CD8-positive, alpha-beta T cell (primary cell): ENCODE measurements at regions of chr10 and their contacts with region 1.

Region 1: GRCh38 chr10:35563261-35563891 is 41.8 kb upstream of the GJD4 start:
- DNase-seq: peak in 6 of 9 experiments; percentile 26 to 66 (median 42)
- ATAC-seq: peak; percentile 63
- H3K4me3 ChIP-seq: no peak overlapping the region
- H3K4me3 Mint-ChIP-seq: no peak overlapping the region
- H3K27ac ChIP-seq: no peak overlapping the region
- H3K27ac Mint-ChIP-seq: peak overlapping the region; percentile 16
- H3K4me1 ChIP-seq: peaks cover 7% of the 10 kb centered on the region
- H3K4me1 Mint-ChIP-seq: peaks cover 6% of the 10 kb centered on the region
- H3K27me3 ChIP-seq: no peaks in the 10 kb centered on the region
- H3K27me3 Mint-ChIP-seq: no peaks in the 10 kb centered on the region
- CTCF ChIP-seq: peak; percentile 88

Region 2: GRCh38 chr10:35246770-35247343 is 316.5 kb before region 1 on chr10:
- CTCF ChIA-PET with region 1: interaction called, 4 read pairs
- POLR2A ChIA-PET with region 1: no interaction called
- intact Hi-C with region 1: loop called (anchors 5 to 10 kb)
- DNase-seq: no peak
- ATAC-seq: no peak
- H3K4me3 ChIP-seq: no peak overlapping the region
- H3K4me3 Mint-ChIP-seq: no peak overlapping the region
- H3K27ac ChIP-seq: no peak overlapping the region
- H3K27ac Mint-ChIP-seq: no peak overlapping the region
- H3K4me1 ChIP-seq: no peaks in the 10 kb centered on the region
- H3K4me1 Mint-ChIP-seq: no peaks in the 10 kb centered on the region
- H3K27me3 ChIP-seq: no peaks in the 10 kb centered on the region
- H3K27me3 Mint-ChIP-seq: peaks cover 9% of the 10 kb centered on the region
- CTCF ChIP-seq: no peak

Region 3: DNA sequence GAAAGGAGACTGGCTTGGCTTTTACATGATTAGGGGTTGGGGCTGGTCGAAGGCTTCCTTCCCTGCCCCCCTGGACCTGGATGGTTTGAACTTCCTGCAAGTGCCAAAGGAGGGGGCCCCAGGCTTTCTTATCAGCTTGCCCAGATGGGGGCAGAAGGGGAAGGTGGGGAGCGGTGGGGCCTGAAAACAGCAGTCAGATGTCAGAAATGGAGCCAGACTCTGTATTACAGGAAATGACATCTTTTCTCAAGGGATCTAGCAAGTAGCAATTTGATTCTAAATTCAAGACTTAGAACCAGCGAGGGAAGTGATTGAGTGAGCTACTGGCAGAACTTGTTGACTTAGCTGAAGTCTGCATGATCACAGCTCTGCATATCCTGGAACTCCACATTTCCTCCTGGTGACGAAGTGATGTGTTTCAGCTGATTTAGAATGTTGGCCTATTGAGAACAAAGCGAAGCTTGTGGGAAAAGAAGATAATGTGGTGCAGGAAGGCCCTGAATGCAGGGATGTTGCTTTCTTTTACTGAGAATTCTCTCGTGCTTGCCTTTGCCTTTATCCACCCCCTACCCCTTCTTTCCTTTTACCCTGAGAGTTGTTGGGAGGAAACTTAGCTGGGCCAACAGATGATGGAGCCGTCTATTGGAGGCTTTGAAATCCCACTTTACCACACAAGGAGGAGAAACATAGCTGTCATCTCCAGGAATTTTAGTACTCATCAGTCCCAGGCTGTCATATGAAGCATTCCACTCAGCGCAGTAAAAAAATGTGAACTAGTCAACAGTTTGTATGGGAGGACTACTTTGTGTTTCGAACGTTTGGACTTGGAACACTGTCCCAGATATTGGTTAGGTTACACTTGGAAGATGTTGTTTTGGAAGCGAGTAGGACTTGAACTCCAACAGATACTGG is 183.9 kb before region 1 on chr10:
- CTCF ChIA-PET with region 1: interaction called, 6 read pairs
- POLR2A ChIA-PET with region 1: no interaction called
- intact Hi-C with region 1: loop called in 1 of 2 experiments (anchors 5 kb)
- DNase-seq: peak in 5 of 9 experiments; percentile 16 to 65 (median 35)
- ATAC-seq: peak; percentile 75
- H3K4me3 ChIP-seq: no peak overlapping the region
- H3K4me3 Mint-ChIP-seq: peak overlapping the region; percentile 69
- H3K27ac ChIP-seq: peak overlapping the region in 1 of 2 experiments; percentile 10
- H3K27ac Mint-ChIP-seq: peak overlapping the region; percentile 83
- H3K4me1 ChIP-seq: peaks cover 40% of the 10 kb centered on the region
- H3K4me1 Mint-ChIP-seq: peaks cover 82% of the 10 kb centered on the region
- H3K27me3 ChIP-seq: no peaks in the 10 kb centered on the region
- H3K27me3 Mint-ChIP-seq: no peaks in the 10 kb centered on the region
- CTCF ChIP-seq: no peak

Region 4: GRCh38 chr10:35520996-35521395 is 42.4 kb before region 1 on chr10:
- CTCF ChIA-PET with region 1: no interaction called
- POLR2A ChIA-PET with region 1: no interaction called
- intact Hi-C with region 1: no loop called
- DNase-seq: no peak
- ATAC-seq: no peak
- H3K4me3 ChIP-seq: no peak overlapping the region
- H3K4me3 Mint-ChIP-seq: no peak overlapping the region
- H3K27ac ChIP-seq: no peak overlapping the region
- H3K27ac Mint-ChIP-seq: no peak overlapping the region
- H3K4me1 ChIP-seq: peaks cover 6% of the 10 kb centered on the region
- H3K4me1 Mint-ChIP-seq: peaks cover 17% of the 10 kb centered on the region
- H3K27me3 ChIP-seq: no peaks in the 10 kb centered on the region
- H3K27me3 Mint-ChIP-seq: no peaks in the 10 kb centered on the region
- CTCF ChIP-seq: no peak

Region 5: DNA sequence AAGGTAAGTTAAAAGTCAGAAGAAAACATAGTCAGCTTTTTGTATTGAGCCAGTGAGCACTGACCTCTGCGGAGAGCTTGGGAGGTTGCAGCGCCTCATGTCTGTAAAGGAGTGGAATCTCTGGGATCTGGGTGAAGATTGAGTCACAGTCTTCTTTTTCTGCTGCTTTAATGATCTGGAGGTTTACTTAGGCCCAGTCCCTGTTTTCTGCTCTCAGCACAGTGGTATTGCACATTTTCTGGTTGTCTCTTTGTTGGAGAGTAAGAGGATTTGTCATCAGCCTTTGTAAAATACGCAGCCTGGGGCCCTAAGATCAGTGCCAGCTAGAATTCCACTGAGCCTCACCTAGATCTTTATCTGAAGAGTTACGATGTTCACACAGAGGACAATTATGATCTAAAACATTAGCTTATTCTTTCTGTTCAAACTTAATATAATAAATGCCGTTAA is 16.5 kb before region 1 on chr10:
- CTCF ChIA-PET with region 1: interaction called, 11 read pairs
- POLR2A ChIA-PET with region 1: no interaction called
- intact Hi-C with region 1: no loop called
- DNase-seq: no peak
- ATAC-seq: no peak
- H3K4me3 ChIP-seq: no peak overlapping the region
- H3K4me3 Mint-ChIP-seq: no peak overlapping the region
- H3K27ac ChIP-seq: no peak overlapping the region
- H3K27ac Mint-ChIP-seq: no peak overlapping the region
- H3K4me1 ChIP-seq: no peaks in the 10 kb centered on the region
- H3K4me1 Mint-ChIP-seq: no peaks in the 10 kb centered on the region
- H3K27me3 ChIP-seq: no peaks in the 10 kb centered on the region
- H3K27me3 Mint-ChIP-seq: no peaks in the 10 kb centered on the region
- CTCF ChIP-seq: no peak

Region 6: DNA sequence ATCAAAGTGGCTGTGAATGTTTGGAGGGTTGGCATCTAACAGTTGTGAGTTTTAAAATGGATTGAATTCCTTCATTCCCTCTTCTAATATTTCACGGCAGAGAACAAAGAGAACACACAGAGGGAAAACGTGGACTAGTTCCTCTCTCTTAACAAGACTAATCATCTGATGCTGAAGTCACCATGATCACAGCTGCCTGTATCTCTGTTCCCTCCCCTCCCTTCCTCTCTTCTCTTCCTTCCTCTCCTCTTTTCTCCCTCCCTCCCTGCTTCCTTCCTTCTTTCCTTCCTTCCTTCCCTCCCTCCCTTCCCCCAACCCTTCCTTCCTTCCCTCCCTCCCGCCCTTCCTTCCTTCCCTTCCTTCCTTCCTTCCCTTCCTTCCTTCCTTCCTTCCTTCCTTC is 31.7 kb after region 1 on chr10:
- CTCF ChIA-PET with region 1: no interaction called
- POLR2A ChIA-PET with region 1: no interaction called
- intact Hi-C with region 1: no loop called
- DNase-seq: no peak
- ATAC-seq: no peak
- H3K4me3 ChIP-seq: no peak overlapping the region
- H3K4me3 Mint-ChIP-seq: no peak overlapping the region
- H3K27ac ChIP-seq: no peak overlapping the region
- H3K27ac Mint-ChIP-seq: no peak overlapping the region
- H3K4me1 ChIP-seq: no peaks in the 10 kb centered on the region
- H3K4me1 Mint-ChIP-seq: no peaks in the 10 kb centered on the region
- H3K27me3 ChIP-seq: no peaks in the 10 kb centered on the region
- H3K27me3 Mint-ChIP-seq: peaks cover 18% of the 10 kb centered on the region
- CTCF ChIP-seq: no peak

Region 7: GRCh38 chr10:35854661-35855060 is 291.3 kb after region 1 on chr10:
- CTCF ChIA-PET with region 1: no interaction called
- POLR2A ChIA-PET with region 1: no interaction called
- intact Hi-C with region 1: no loop called
- DNase-seq: no peak
- ATAC-seq: no peak
- H3K4me3 ChIP-seq: no peak overlapping the region
- H3K4me3 Mint-ChIP-seq: no peak overlapping the region
- H3K27ac ChIP-seq: no peak overlapping the region
- H3K27ac Mint-ChIP-seq: no peak overlapping the region
- H3K4me1 ChIP-seq: no peaks in the 10 kb centered on the region
- H3K4me1 Mint-ChIP-seq: no peaks in the 10 kb centered on the region
- H3K27me3 ChIP-seq: no peaks in the 10 kb centered on the region
- H3K27me3 Mint-ChIP-seq: no peaks in the 10 kb centered on the region
- CTCF ChIP-seq: no peak